ENCODE measurements at regions of chr5 and their contacts with region 1.

Region 1: GRCh38 chr5:79020861-79021561 is 35.9 kb upstream of the ARSB start:
- DNase-seq: peak; percentile 78
- ATAC-seq: peak; percentile 90
- H3K4me3 ChIP-seq: peak overlapping the region; percentile 39; the same call in 1 of the 2 replicates
- H3K27ac ChIP-seq: peak overlapping the region; percentile 35
- H3K4me1 ChIP-seq: peaks cover 5% of the 10 kb centered on the region
- H3K27me3 ChIP-seq: no peaks in the 10 kb centered on the region
- CTCF ChIP-seq: peak; percentile 77
- POLR2A ChIP-seq: no peak
- RAD21 ChIP-seq: peak; percentile 77

Region 2: DNA sequence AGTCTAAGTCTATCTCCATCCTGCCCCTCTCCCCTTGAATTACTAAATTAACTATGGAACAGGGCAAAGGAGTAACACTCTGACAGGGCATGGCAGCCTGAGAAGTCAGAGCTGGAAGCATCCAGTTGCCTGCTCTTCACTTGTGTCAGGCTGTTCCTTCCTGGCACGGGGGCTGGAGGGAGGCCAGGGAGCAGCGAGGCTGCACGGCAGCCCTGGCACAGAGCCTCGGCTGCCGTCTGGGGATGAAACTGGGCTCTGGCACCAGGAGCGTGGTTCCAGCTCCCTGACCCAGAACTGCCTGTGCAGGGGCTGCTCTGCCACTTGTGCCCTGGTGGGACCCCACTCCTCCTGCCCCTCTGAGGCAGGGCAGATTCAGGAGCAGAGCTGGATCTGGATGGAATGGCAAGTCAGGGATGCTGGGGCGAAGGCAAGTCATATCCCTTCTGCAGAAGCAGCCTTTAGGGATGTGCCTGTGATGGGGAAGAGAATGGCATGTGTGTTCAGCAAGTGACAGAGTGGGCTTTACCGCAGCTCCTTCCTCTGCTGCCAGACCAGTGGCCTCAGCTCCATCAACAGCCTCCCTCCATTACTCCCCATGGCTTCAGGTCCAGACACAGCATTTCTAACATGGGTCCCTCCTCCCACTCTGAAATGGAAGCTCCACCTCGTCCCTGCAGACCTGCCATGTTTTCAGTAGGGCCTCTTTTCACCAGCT is 1852.7 kb before region 1 on chr5:
- CTCF ChIA-PET with region 1: no interaction called
- POLR2A ChIA-PET with region 1: no interaction called
- dilution Hi-C with region 1: no loop called
- in situ Hi-C with region 1: no loop called
- intact Hi-C with region 1: loop called (anchors 10 kb)
- DNase-seq: peak; percentile 57
- ATAC-seq: peak; percentile 77
- H3K4me3 ChIP-seq: no peak overlapping the region
- H3K27ac ChIP-seq: peak overlapping the region; percentile 80
- H3K4me1 ChIP-seq: peaks cover 20% of the 10 kb centered on the region
- H3K27me3 ChIP-seq: peaks cover 4% of the 10 kb centered on the region
- CTCF ChIP-seq: no peak
- POLR2A ChIP-seq: no peak
- RAD21 ChIP-seq: no peak

Region 3: DNA sequence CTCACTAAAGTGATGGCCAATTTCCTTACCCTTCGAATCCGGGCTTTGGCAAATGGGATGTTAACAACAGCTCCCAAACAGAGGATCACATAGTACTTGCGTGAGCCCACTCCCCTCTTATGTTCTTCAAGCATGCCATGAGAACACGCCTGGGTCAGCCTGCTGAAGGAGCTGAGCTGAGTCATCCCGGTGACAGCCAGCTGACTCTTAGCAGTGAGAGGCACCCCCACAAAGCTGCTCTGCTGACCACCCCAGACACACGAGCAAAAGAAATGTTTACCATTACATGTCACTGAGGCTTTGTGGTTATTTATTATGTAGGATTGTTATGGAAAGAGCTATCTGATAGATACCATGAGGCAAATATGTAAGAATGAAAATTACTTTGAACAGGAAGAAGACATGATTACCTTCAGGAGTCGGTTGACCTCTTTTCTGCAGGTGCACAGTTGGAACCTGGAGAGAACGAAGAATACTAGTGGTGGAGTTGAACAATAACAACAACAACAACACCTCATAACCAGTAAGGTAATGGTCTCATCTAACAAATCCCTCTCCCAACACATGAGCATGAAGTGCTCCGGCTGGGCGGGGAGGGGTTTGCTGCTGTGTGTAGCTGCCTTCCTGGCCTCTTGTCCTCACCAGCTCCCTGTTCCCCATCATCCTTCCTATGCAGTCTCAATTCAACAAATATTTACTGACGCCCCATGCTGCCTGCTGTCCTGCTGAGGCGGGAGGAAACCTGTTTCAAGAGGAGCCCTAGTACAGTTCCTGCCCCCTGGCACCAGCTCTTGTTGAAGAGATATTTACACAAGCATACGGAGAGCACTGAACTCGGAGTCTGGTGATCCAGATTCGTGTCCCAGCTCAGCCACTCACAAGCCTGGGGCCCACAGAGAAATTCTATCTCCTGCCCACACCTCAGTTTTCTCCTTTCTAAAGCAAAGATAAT is 303.1 kb before region 1 on chr5:
- CTCF ChIA-PET with region 1: no interaction called
- POLR2A ChIA-PET with region 1: no interaction called
- dilution Hi-C with region 1: no loop called
- in situ Hi-C with region 1: no loop called
- intact Hi-C with region 1: no loop called
- DNase-seq: peak; percentile 80
- ATAC-seq: peak; percentile 79
- H3K4me3 ChIP-seq: no peak overlapping the region
- H3K27ac ChIP-seq: peak overlapping the region; percentile 32; the same call in 1 of the 2 replicates
- H3K4me1 ChIP-seq: peaks cover 32% of the 10 kb centered on the region
- H3K27me3 ChIP-seq: no peaks in the 10 kb centered on the region
- CTCF ChIP-seq: no peak
- POLR2A ChIP-seq: no peak
- RAD21 ChIP-seq: no peak

Region 4: DNA sequence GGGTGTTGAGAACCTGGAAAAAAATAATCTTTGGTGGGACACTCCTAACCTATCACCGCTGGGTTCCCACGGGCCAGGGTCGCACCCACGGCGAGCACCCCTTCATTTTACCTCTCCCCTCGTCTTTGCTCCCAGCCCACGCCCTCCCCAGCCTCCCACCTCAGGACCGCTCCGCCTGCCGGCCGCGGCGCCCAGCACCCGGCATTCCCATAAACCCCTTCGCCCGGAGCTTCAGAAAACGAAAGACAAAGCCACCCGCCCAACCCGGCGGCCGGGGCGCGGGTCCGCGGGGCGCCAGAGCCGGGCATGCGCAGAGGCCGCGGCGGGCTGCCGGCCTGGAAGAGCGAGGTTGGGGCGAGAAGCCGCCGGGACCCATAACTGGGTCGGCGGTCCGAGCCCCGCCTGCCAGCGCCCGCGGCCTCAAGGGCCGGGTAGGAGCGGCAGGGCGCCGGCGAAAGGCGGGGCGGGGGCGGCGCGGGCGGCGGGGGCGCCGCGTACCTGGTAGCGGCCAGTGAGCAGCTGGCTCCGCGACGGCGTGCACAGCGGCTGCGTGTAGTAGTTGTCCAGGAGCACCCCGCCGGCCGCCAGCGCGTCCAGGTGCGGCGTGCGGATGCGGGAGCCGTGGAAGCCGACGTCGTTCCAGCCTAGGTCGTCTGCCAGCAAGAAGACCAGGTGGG is 36.4 kb before region 1 on chr5:
- CTCF ChIA-PET with region 1: interaction called, 9 read pairs
- POLR2A ChIA-PET with region 1: interaction called, 3 read pairs
- dilution Hi-C with region 1: no loop called
- in situ Hi-C with region 1: no loop called
- intact Hi-C with region 1: loop called (anchors 5 kb)
- DNase-seq: peak; percentile 77
- ATAC-seq: peak; percentile 87
- H3K4me3 ChIP-seq: peak overlapping the region; percentile 72
- H3K27ac ChIP-seq: peak overlapping the region; percentile 79
- H3K4me1 ChIP-seq: peaks cover 7% of the 10 kb centered on the region
- H3K27me3 ChIP-seq: no peaks in the 10 kb centered on the region
- CTCF ChIP-seq: peak; percentile 31; the same call in 1 of the 2 replicates
- POLR2A ChIP-seq: peak; percentile 62; the same call in 1 of the 2 replicates
- RAD21 ChIP-seq: no peak

Region 5: DNA sequence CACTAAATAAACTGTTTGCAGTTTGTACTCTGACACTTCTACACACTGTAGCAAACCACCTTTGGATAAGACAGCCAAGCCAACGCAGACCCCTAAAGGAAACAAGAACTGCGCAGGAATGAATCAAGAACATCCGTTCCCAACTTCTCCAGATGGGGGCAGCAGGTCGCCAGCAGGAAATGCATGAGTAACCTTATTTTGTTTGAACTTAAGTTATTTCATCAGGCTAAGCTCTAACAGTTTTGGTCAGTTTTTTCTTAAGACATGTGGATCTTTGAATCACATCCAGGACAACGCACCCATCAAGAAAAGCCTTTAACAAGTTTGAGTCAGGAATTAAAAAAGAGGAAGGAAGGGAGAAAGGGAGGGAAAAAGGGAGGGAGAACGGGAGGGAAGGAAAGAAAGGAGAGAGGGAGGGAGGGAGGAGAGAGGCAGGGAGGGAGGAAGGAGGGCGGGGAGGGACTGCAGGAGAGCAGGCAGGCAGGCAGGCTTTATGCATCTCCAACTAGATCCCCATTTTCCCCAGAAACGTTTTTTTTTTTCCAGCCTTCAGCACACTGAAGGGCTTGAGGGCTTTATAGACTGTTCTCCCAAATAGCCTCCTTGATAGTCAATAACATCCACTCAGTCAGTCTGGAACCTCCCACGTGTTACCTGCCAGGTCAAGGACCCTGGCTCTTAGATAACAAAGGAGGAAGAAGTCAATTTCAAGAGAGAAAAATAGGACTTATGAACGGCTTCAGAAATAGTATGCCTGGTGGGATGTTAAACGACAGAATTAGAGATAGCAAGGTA is 112.8 kb after region 1 on chr5:
- CTCF ChIA-PET with region 1: interaction called, 115 read pairs
- POLR2A ChIA-PET with region 1: interaction called, 3 read pairs
- dilution Hi-C with region 1: no loop called
- in situ Hi-C with region 1: loop called (anchors 5 kb)
- intact Hi-C with region 1: loop called (anchors 1 kb)
- DNase-seq: peak; percentile 88
- ATAC-seq: peak; percentile 94
- H3K4me3 ChIP-seq: peak overlapping the region; percentile 31
- H3K27ac ChIP-seq: peak overlapping the region; percentile 60; the same call in 1 of the 2 replicates
- H3K4me1 ChIP-seq: no peaks in the 10 kb centered on the region
- H3K27me3 ChIP-seq: peaks cover 13% of the 10 kb centered on the region
- CTCF ChIP-seq: peak; percentile 86
- POLR2A ChIP-seq: no peak
- RAD21 ChIP-seq: peak; percentile 79

Region 6: DNA sequence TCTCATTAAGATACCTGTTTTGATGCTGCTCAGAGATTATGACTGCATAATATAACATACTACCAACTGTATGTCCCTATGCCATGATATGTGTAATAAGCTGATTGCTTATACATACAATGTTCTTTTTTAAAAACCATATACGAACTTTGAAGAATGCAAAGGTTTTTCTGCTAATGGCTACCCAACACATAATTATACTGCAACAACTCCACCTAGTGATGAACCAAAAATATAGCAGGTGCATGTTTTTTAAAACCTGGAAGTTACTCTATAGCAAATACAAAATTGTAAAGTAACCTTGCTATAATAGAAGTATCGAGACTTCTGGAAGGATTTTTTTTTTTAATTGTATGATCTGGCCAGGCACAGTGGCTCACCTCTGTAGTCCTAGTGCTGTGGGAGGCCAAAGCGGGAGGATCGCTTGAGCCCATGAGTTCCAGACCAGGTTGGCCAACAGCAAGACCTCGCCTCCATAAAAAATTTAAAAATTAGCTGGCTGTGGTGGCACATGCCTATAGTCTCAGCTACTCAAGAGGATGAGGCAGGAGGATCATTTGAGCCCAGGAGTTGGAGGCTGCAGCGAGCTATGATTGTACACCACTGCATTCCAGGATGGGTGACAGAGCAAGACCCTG is 443.8 kb after region 1 on chr5:
- CTCF ChIA-PET with region 1: interaction called, 12 read pairs
- POLR2A ChIA-PET with region 1: interaction called, 3 read pairs
- dilution Hi-C with region 1: no loop called
- in situ Hi-C with region 1: loop called (anchors 10 kb)
- intact Hi-C with region 1: loop called (anchors 1 kb)
- DNase-seq: peak; percentile 53
- ATAC-seq: peak; percentile 86
- H3K4me3 ChIP-seq: no peak overlapping the region
- H3K27ac ChIP-seq: no peak overlapping the region
- H3K4me1 ChIP-seq: no peaks in the 10 kb centered on the region
- H3K27me3 ChIP-seq: no peaks in the 10 kb centered on the region
- CTCF ChIP-seq: peak; percentile 76
- POLR2A ChIP-seq: no peak
- RAD21 ChIP-seq: peak; percentile 75

Region 7: GRCh38 chr5:79612667-79613198 is 591.7 kb after region 1 on chr5:
- CTCF ChIA-PET with region 1: no interaction called
- POLR2A ChIA-PET with region 1: no interaction called
- dilution Hi-C with region 1: no loop called
- in situ Hi-C with region 1: no loop called
- intact Hi-C with region 1: loop called (anchors 10 kb)
- DNase-seq: no peak
- ATAC-seq: no peak; the same call in 1 of the 2 replicates
- H3K4me3 ChIP-seq: peak overlapping the region; percentile 75
- H3K27ac ChIP-seq: peak overlapping the region; percentile 89
- H3K4me1 ChIP-seq: no peaks in the 10 kb centered on the region
- H3K27me3 ChIP-seq: no peaks in the 10 kb centered on the region
- CTCF ChIP-seq: no peak
- POLR2A ChIP-seq: 0 out of 2 replicates have a peak, but pooled peaks have one; percentile 15
- RAD21 ChIP-seq: no peak

Region 8: DNA sequence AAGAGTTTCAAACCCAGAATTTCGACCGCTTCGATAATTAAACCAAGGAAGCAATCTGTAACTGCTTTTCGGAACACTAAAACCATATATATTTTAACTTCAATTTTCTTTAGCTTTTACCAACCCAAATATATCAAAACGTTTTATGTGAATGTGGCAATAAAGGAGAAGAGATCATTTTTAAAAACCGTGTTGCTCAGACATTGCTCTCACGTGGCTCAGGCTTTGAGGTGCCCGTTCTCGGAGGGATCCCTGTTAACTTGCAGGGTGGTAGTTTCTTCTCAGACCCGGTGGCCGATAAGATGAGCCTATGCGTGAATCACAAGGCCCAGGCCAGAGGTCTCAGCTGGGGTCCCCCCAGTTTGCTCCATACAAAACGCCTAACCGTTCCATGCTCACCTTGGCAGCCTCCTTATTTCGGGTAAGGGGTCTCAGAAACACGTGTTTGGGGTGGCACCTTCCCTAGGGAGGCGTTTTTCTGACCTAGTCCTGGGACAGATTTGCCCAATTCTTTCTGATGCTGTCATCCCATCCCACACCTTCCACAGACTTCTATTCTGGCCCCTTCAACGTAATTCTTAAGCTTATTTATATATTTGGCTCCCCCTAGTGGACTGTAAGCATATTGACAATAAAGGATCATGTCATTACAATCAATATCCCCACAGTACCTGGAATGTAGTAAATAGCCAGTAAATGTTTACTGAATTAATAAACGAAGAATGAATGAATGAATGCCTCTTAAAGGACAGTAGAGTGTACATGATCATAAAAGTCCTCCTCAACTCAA is 1062.3 kb after region 1 on chr5:
- CTCF ChIA-PET with region 1: interaction called, 3 read pairs
- POLR2A ChIA-PET with region 1: no interaction called
- dilution Hi-C with region 1: no loop called
- in situ Hi-C with region 1: no loop called
- intact Hi-C with region 1: loop called (anchors 2 kb)
- DNase-seq: peak; percentile 72
- ATAC-seq: peak; percentile 83
- H3K4me3 ChIP-seq: no peak overlapping the region
- H3K27ac ChIP-seq: no peak overlapping the region
- H3K4me1 ChIP-seq: peaks cover 3% of the 10 kb centered on the region; the same call in 1 of the 2 replicates
- H3K27me3 ChIP-seq: peaks cover 2% of the 10 kb centered on the region; the same call in 1 of the 2 replicates
- CTCF ChIP-seq: peak; percentile 80
- POLR2A ChIP-seq: no peak
- RAD21 ChIP-seq: peak; percentile 69